ENCODE measurements at regions of chr11 and their contacts with region 1.

Region 1: GRCh38 chr11:7851391-7851790 is 54.6 kb upstream of the OR5P2 start:
- DNase-seq: no peak
- ATAC-seq: no peak
- H3K4me3 ChIP-seq: no peak overlapping the region
- H3K4me3 Mint-ChIP-seq: no peak overlapping the region
- H3K27ac ChIP-seq: no peak overlapping the region
- H3K27ac Mint-ChIP-seq: no peak overlapping the region
- H3K4me1 ChIP-seq: no peaks in the 10 kb centered on the region
- H3K4me1 Mint-ChIP-seq: no peaks in the 10 kb centered on the region
- H3K27me3 ChIP-seq: no peaks in the 10 kb centered on the region
- H3K27me3 Mint-ChIP-seq: peaks cover 0 to 30% (median 18%) of the 10 kb centered on the region in 5 donors

Region 2: GRCh38 chr11:7208391-7208790 is 643.0 kb before region 1 on chr11:
- CTCF ChIA-PET with region 1: no interaction called
- POLR2A ChIA-PET with region 1: no interaction called
- intact Hi-C with region 1: loop called in 1 of 2 experiments (anchors 5 kb)
- DNase-seq: no peak
- ATAC-seq: no peak
- H3K4me3 ChIP-seq: no peak overlapping the region
- H3K4me3 Mint-ChIP-seq: no peak overlapping the region
- H3K27ac ChIP-seq: no peak overlapping the region
- H3K27ac Mint-ChIP-seq: no peak overlapping the region
- H3K4me1 ChIP-seq: no peaks in the 10 kb centered on the region
- H3K4me1 Mint-ChIP-seq: no peaks in the 10 kb centered on the region
- H3K27me3 ChIP-seq: no peaks in the 10 kb centered on the region
- H3K27me3 Mint-ChIP-seq: peaks cover 7 to 40% (median 17%) of the 10 kb centered on the region in 5 donors

Region 3: DNA sequence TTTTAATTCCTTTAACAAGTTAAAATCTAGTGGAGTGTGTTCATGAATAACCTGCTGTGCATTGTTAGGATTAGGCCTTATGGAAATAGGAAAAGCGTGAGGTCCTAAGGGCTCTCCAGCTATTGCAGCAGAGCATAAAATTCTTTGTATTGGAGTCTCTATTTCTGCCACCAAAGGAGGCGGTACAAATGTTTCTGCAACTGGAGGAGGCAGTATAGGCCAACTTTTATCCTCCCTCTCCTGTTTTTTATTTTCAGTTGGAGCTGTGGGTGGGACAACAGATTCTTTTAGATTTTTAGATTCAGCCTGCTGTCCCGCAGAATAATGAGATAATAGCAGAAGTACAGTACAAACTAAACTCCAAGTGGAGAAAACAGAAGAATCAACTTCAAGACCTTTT is 53.5 kb after region 1 on chr11:
- CTCF ChIA-PET with region 1: no interaction called
- POLR2A ChIA-PET with region 1: no interaction called
- intact Hi-C with region 1: no loop called
- DNase-seq: no peak
- ATAC-seq: no peak
- H3K4me3 ChIP-seq: no peak overlapping the region
- H3K4me3 Mint-ChIP-seq: no peak overlapping the region
- H3K27ac ChIP-seq: no peak overlapping the region
- H3K27ac Mint-ChIP-seq: no peak overlapping the region
- H3K4me1 ChIP-seq: no peaks in the 10 kb centered on the region
- H3K4me1 Mint-ChIP-seq: no peaks in the 10 kb centered on the region
- H3K27me3 ChIP-seq: peaks cover 0 to 3% of the 10 kb centered on the region in 2 donors
- H3K27me3 Mint-ChIP-seq: peaks cover 20 to 43% (median 26%) of the 10 kb centered on the region in 5 donors